ENCODE measurements at regions of chr10 and their contacts with region 1.

Region 1: DNA sequence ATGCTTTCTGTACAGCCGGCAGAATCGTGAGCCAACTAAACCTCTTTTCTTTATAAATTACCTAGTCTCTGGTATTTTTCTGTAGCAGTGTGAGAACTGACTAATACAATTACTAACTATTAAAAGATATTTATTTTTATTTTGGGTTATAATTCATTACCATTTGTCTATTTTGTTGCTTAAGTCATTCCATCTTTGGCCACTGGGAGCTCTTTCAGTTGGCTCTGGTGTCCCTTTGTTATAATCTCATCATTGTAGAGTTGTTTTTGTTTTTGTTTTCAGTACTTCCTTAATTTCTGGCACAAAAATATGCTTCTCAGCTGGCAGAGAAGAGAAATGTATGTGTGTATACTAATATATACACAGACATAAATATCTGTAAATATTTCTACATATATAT is 807.9 kb upstream of the MBL2 start:
- DNase-seq: no peak
- H3K4me3 ChIP-seq: no peak overlapping the region
- H3K27ac ChIP-seq: no peak overlapping the region
- H3K4me1 ChIP-seq: no peaks in the 10 kb centered on the region
- H3K27me3 ChIP-seq: no peaks in the 10 kb centered on the region
- CTCF ChIP-seq: no peak
- POLR2A ChIP-seq: no peak

Region 2: DNA sequence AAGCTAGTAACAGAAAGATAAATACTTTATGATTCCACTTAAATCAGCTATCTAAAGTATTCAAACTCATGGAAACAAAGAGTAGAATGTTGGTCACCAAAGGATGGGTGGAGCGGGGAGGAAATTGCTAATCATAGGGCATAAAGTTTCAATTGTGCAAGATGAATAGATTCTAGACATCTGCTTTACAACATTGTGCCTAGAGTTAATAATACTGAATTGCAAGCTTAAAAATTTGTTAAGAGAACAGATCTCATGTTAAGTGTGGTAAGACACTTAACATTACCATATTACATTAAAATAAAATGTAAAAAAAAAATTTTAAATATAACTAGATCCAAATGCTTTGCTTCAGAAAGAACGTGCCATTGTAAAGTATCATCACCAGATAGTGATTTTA is 396.7 kb before region 1 on chr10:
- intact Hi-C with region 1: loop called (anchors 5 kb)
- DNase-seq: no peak
- H3K4me3 ChIP-seq: no peak overlapping the region
- H3K27ac ChIP-seq: no peak overlapping the region
- H3K4me1 ChIP-seq: no peaks in the 10 kb centered on the region
- H3K27me3 ChIP-seq: no peaks in the 10 kb centered on the region
- CTCF ChIP-seq: no peak
- POLR2A ChIP-seq: no peak

Region 3: DNA sequence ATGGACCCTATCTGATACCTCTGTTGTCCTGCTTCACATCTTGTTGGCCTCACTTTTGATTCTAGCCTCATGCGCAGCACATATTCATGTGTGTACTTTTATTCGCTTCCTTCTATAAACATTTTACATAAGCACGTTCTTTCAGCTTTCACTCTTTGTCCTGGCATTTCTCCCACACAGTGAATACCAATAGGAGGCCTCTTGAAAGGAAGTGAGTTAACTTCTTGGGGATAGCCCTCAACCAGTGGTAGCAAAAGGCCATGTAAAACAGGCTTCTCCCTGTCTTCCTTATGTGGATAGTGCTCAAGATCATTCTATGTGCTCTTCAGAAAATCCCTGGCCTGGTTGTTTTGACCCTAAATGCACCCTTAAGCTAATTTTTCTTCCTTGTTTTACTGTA is 173.9 kb before region 1 on chr10:
- intact Hi-C with region 1: no loop called
- DNase-seq: no peak
- H3K4me3 ChIP-seq: no peak overlapping the region
- H3K27ac ChIP-seq: no peak overlapping the region
- H3K4me1 ChIP-seq: no peaks in the 10 kb centered on the region
- H3K27me3 ChIP-seq: no peaks in the 10 kb centered on the region
- CTCF ChIP-seq: no peak
- POLR2A ChIP-seq: no peak

Region 4: GRCh38 chr10:53601260-53601875 is 20.9 kb after region 1 on chr10:
- intact Hi-C with region 1: no loop called
- DNase-seq: no peak
- H3K4me3 ChIP-seq: no peak overlapping the region
- H3K27ac ChIP-seq: no peak overlapping the region
- H3K4me1 ChIP-seq: no peaks in the 10 kb centered on the region
- H3K27me3 ChIP-seq: no peaks in the 10 kb centered on the region
- CTCF ChIP-seq: peak in 2 of 3 donors; percentile 40 to 68
- POLR2A ChIP-seq: no peak